CD8-positive, alpha-beta T cell (primary cell): ENCODE measurements at regions of chr4 and their contacts with region 1.

Region 1: GRCh38 chr4:108166441-108167315 is 2.1 kb downstream of the LEF1 start:
- DNase-seq: peak; percentile 16 to 78 (median 58)
- ATAC-seq: peak; percentile 15
- H3K4me3 ChIP-seq: peak overlapping the region; percentile 73 to 78
- H3K4me3 Mint-ChIP-seq: peak overlapping the region; percentile 95
- H3K27ac ChIP-seq: peak overlapping the region; percentile 42 to 59
- H3K27ac Mint-ChIP-seq: peak overlapping the region; percentile 97
- H3K4me1 ChIP-seq: peaks cover 22% of the 10 kb centered on the region
- H3K4me1 Mint-ChIP-seq: peaks cover 47% of the 10 kb centered on the region
- H3K27me3 ChIP-seq: peaks cover 0 to 32% of the 10 kb centered on the region in 2 experiments
- H3K27me3 Mint-ChIP-seq: peaks cover 3% of the 10 kb centered on the region
- CTCF ChIP-seq: no peak

Region 2: DNA sequence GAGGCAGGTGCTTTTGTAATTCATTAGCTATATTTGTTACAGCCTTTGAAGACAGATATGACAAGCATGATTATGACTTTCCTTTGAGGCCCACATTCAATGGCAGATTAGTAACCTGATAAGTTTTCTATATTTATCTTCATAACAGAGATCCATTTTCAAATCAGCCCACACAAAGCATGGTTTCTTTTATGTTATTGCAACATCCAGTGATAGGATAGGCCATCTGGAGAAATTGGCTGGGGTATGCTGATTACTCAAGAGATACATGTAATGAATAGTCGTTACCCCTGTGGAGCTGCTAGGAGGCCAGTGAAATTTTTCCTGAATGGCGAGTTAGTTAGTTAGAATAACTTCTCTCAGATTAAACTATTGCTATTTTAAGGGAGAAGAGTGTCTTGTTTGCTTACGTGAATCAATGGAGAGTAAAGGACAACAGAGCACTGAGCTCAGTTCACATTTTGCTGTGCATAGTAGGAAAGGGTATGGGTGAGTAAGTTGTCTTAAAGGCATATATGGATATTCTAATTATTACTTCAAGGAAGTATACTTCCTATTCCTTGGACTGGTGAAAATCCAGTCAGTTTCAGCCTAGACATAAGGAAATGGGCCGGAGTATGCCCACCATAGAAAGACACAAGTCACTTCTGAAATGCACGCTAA is 1051.4 kb before region 1 on chr4:
- CTCF ChIA-PET with region 1: no interaction called
- POLR2A ChIA-PET with region 1: no interaction called
- intact Hi-C with region 1: no loop called
- DNase-seq: no peak
- ATAC-seq: no peak
- H3K4me3 ChIP-seq: no peak overlapping the region
- H3K4me3 Mint-ChIP-seq: no peak overlapping the region
- H3K27ac ChIP-seq: no peak overlapping the region
- H3K27ac Mint-ChIP-seq: no peak overlapping the region
- H3K4me1 ChIP-seq: no peaks in the 10 kb centered on the region
- H3K4me1 Mint-ChIP-seq: no peaks in the 10 kb centered on the region
- H3K27me3 ChIP-seq: no peaks in the 10 kb centered on the region
- H3K27me3 Mint-ChIP-seq: no peaks in the 10 kb centered on the region
- CTCF ChIP-seq: no peak

Region 3: GRCh38 chr4:108148316-108148715 is 18.4 kb before region 1 on chr4:
- CTCF ChIA-PET with region 1: interaction called, 3 read pairs
- POLR2A ChIA-PET with region 1: interaction called, 8 read pairs
- intact Hi-C with region 1: loop called in 1 of 2 experiments (anchors 2 kb)
- DNase-seq: peak in 4 of 9 experiments; percentile 39 to 69 (median 62)
- ATAC-seq: peak; percentile 66
- H3K4me3 ChIP-seq: peak overlapping the region in 1 of 2 experiments; percentile 1
- H3K4me3 Mint-ChIP-seq: peak overlapping the region; percentile 38
- H3K27ac ChIP-seq: peak overlapping the region; percentile 28 to 37
- H3K27ac Mint-ChIP-seq: peak overlapping the region; percentile 93
- H3K4me1 ChIP-seq: peaks cover 91% of the 10 kb centered on the region
- H3K4me1 Mint-ChIP-seq: peaks cover 91% of the 10 kb centered on the region
- H3K27me3 ChIP-seq: no peaks in the 10 kb centered on the region
- H3K27me3 Mint-ChIP-seq: no peaks in the 10 kb centered on the region
- CTCF ChIP-seq: no peak

Region 4: GRCh38 chr4:108193886-108194672 is 27.4 kb after region 1 on chr4:
- CTCF ChIA-PET with region 1: no interaction called
- POLR2A ChIA-PET with region 1: no interaction called
- intact Hi-C with region 1: no loop called
- DNase-seq: no peak
- ATAC-seq: no peak
- H3K4me3 ChIP-seq: no peak overlapping the region
- H3K4me3 Mint-ChIP-seq: no peak overlapping the region
- H3K27ac ChIP-seq: no peak overlapping the region
- H3K27ac Mint-ChIP-seq: no peak overlapping the region
- H3K4me1 ChIP-seq: no peaks in the 10 kb centered on the region
- H3K4me1 Mint-ChIP-seq: peaks cover 21% of the 10 kb centered on the region
- H3K27me3 ChIP-seq: no peaks in the 10 kb centered on the region
- H3K27me3 Mint-ChIP-seq: no peaks in the 10 kb centered on the region
- CTCF ChIP-seq: no peak

Region 5: GRCh38 chr4:108355186-108355901 is 188.7 kb after region 1 on chr4:
- CTCF ChIA-PET with region 1: interaction called, 5 read pairs
- POLR2A ChIA-PET with region 1: no interaction called
- intact Hi-C with region 1: loop called (anchors 2 to 5 kb)
- DNase-seq: peak in 6 of 9 experiments; percentile 22 to 85 (median 41)
- ATAC-seq: peak; percentile 87
- H3K4me3 ChIP-seq: peak overlapping the region in 1 of 2 experiments; percentile 10
- H3K4me3 Mint-ChIP-seq: peak overlapping the region; percentile 55
- H3K27ac ChIP-seq: peak overlapping the region; percentile 51 to 54
- H3K27ac Mint-ChIP-seq: peak overlapping the region; percentile 91
- H3K4me1 ChIP-seq: peaks cover 47% of the 10 kb centered on the region
- H3K4me1 Mint-ChIP-seq: peaks cover 66% of the 10 kb centered on the region
- H3K27me3 ChIP-seq: peaks cover 0 to 3% of the 10 kb centered on the region in 2 experiments
- H3K27me3 Mint-ChIP-seq: no peaks in the 10 kb centered on the region
- CTCF ChIP-seq: no peak